ENCODE measurements at regions of chr4 and their contacts with region 1.

Region 1: GRCh38 chr4:158006990-158007389 is 165.8 kb downstream of the GASK1B start:
- DNase-seq: peak; percentile 100
- H3K4me3 ChIP-seq: no peak overlapping the region
- H3K27ac ChIP-seq: peak overlapping the region; percentile 75
- H3K4me1 ChIP-seq: peaks cover 36% of the 10 kb centered on the region
- H3K27me3 ChIP-seq: no peaks in the 10 kb centered on the region
- CTCF ChIP-seq: no peak
- POLR2A ChIP-seq: no peak

Region 2: DNA sequence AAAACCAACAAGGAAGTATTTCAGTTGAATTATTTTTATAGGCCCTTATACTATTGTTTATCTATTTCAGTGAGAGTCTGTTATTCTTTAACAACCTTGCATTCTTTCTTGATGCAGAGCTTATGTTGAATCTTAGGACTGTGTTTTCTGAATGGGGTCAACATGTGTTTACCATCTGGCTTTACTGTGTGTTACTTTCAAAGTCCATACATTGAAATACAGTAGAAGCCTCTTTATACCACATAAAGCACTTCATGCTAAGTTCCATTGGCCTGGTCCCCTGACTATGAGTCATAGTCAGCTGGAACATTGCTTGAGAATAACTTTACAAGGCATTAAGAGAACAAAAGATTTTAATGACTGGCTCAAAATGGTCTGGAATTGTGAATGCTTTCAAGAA is 13.2 kb after region 1 on chr4:
- CTCF ChIA-PET with region 1: interaction called, 4 read pairs
- POLR2A ChIA-PET with region 1: no interaction called
- dilution Hi-C with region 1: no loop called
- intact Hi-C with region 1: loop called (anchors 1 kb)
- DNase-seq: peak; percentile 96
- H3K4me3 ChIP-seq: peak overlapping the region in 1 of 3 experiments; percentile 30
- H3K27ac ChIP-seq: peak overlapping the region; percentile 95
- H3K4me1 ChIP-seq: peaks cover 59% of the 10 kb centered on the region
- H3K27me3 ChIP-seq: no peaks in the 10 kb centered on the region
- CTCF ChIP-seq: no peak
- POLR2A ChIP-seq: no peak

Region 3: DNA sequence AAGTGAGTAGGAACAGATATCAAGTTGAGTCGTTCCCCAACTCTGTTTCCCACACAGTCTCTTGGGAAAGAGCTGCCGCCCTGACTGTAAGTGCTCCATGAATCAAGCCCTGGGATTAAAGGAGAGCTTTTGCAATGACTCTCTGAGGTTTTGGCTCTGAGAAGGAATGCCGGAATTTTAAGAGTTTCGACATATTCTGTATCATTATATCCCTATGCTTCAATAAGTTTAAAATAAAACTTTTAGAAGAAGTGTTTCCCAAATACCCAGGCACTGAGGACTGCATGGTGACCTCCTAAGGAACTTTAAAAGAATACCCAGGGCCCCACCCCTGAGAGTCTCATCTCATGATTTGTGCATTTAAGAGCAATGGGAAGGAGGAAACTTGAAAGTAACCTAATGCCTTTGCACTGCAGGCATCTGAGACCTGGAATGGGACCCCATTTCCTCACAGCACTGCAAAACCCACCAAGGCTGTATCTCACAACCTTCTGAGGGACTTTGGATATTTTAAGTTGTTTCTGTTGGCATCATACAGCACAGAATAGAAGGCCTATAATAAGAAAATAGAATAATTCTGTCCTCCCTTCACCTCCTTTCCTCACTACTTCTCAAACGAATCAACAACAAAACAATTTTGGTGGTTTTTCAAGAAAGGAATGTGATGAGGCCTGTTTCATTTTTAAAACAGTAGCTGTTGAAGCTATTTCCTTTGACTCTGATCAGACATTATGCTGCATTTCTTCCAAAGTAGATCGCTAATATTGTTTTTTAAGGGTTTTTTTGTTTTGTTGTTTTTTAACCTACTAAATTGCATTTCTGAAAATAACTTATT is 44.6 kb after region 1 on chr4:
- CTCF ChIA-PET with region 1: no interaction called
- POLR2A ChIA-PET with region 1: no interaction called
- dilution Hi-C with region 1: no loop called
- intact Hi-C with region 1: no loop called
- DNase-seq: no peak
- H3K4me3 ChIP-seq: no peak overlapping the region
- H3K27ac ChIP-seq: no peak overlapping the region
- H3K4me1 ChIP-seq: no peaks in the 10 kb centered on the region
- H3K27me3 ChIP-seq: no peaks in the 10 kb centered on the region
- CTCF ChIP-seq: no peak
- POLR2A ChIP-seq: no peak

Measured in endothelial cell of umbilical vein (primary cell).